ENCODE measurements at regions of chr5 and their contacts with region 1.

Region 1: GRCh38 chr5:43019614-43020293 is 20.4 kb downstream of the ANXA2R start:
- DNase-seq: no peak
- ATAC-seq: peak; percentile 78
- H3K4me3 ChIP-seq: peak overlapping the region; percentile 83
- H3K27ac ChIP-seq: peak overlapping the region; percentile 94
- H3K4me1 ChIP-seq: peaks cover 16% of the 10 kb centered on the region
- H3K27me3 ChIP-seq: no peaks in the 10 kb centered on the region
- CTCF ChIP-seq: peak; percentile 42 to 73 (median 59)
- EP300 ChIP-seq: no peak
- POLR2A ChIP-seq: peak; percentile 57
- RAD21 ChIP-seq: peak; percentile 40; the same call in 1 of the 2 replicates

Region 2: GRCh38 chr5:42454216-42454995 is 565.3 kb before region 1 on chr5:
- CTCF ChIA-PET with region 1: no interaction called
- POLR2A ChIA-PET with region 1: no interaction called
- RAD21 ChIA-PET with region 1: no interaction called
- SMC1A ChIA-PET with region 1: no interaction called
- in situ Hi-C with region 1: no loop called
- intact Hi-C with region 1: no loop called
- DNase-seq: no peak
- ATAC-seq: peak; percentile 42; the same call in 2 of the 3 replicates
- H3K4me3 ChIP-seq: no peak overlapping the region
- H3K27ac ChIP-seq: no peak overlapping the region
- H3K4me1 ChIP-seq: no peaks in the 10 kb centered on the region
- H3K27me3 ChIP-seq: no peaks in the 10 kb centered on the region
- CTCF ChIP-seq: no peak
- EP300 ChIP-seq: no peak
- POLR2A ChIP-seq: no peak
- RAD21 ChIP-seq: no peak

Region 3: DNA sequence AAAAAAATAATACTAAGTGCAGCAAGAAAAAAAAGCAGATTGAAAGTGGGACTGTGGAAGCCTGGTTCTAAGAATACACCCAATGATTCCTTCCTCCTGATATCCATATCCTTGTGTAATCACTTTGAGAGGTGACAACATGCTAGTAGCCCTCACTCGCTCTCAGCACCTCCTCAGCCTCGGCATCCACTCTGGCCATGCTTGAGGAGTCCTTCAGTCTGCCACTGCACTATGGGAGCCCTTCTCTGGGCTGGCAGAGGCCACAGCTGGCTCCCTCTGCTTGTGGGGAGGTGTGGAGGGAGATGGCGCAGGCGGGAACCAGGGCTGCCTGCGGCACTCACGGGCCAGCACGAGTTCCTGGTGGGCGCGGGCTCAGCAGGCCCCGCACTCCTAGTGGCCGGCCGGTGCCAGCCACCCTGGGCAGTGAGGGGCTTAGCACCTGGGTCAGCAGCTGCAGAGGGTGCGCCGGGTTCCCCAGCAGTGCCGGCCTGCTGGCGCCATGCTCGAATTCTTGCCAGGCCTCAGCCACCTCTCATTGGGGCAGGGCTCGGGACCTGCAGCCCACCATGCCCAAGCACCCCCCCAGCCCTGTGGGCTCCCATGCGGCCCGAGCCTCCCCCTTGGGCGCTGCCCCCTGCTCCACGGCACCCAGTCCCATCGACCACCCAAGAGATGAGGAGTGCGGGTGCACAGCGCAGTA is 183.5 kb before region 1 on chr5:
- CTCF ChIA-PET with region 1: no interaction called
- POLR2A ChIA-PET with region 1: no interaction called
- RAD21 ChIA-PET with region 1: no interaction called
- SMC1A ChIA-PET with region 1: no interaction called
- in situ Hi-C with region 1: no loop called
- intact Hi-C with region 1: no loop called
- DNase-seq: no peak
- ATAC-seq: no peak
- H3K4me3 ChIP-seq: no peak overlapping the region
- H3K27ac ChIP-seq: no peak overlapping the region
- H3K4me1 ChIP-seq: no peaks in the 10 kb centered on the region
- H3K27me3 ChIP-seq: 0 out of 4 replicates have a peak, but pooled peaks cover 0 to under 1% of the 10 kb centered on the region in 2 experiments
- CTCF ChIP-seq: no peak
- EP300 ChIP-seq: no peak
- POLR2A ChIP-seq: no peak
- RAD21 ChIP-seq: no peak

Region 4: GRCh38 chr5:43008369-43009153 is 11.2 kb before region 1 on chr5:
- CTCF ChIA-PET with region 1: interaction called, 44 read pairs
- POLR2A ChIA-PET with region 1: interaction called, 65 read pairs
- RAD21 ChIA-PET with region 1: interaction called, 78 read pairs
- SMC1A ChIA-PET with region 1: interaction called, 48 read pairs
- in situ Hi-C with region 1: no loop called
- intact Hi-C with region 1: loop called (anchors 1 kb)
- DNase-seq: no peak
- ATAC-seq: peak; percentile 72
- H3K4me3 ChIP-seq: peak overlapping the region; percentile 67
- H3K27ac ChIP-seq: peak overlapping the region; percentile 94
- H3K4me1 ChIP-seq: peaks cover 13% of the 10 kb centered on the region
- H3K27me3 ChIP-seq: no peaks in the 10 kb centered on the region
- CTCF ChIP-seq: peak in 2 of 3 experiments; percentile 5 to 13; a peak in 2 of 6 replicates
- EP300 ChIP-seq: peak in 1 of 2 experiments; percentile 77; a peak in 2 of 4 replicates
- POLR2A ChIP-seq: no peak
- RAD21 ChIP-seq: no peak

Region 5: GRCh38 chr5:43034591-43034968 is 14.8 kb after region 1 on chr5:
- CTCF ChIA-PET with region 1: interaction called, 44 read pairs
- POLR2A ChIA-PET with region 1: interaction called, 32 read pairs
- RAD21 ChIA-PET with region 1: interaction called, 48 read pairs
- SMC1A ChIA-PET with region 1: interaction called, 111 read pairs
- in situ Hi-C with region 1: no loop called
- intact Hi-C with region 1: no loop called
- DNase-seq: no peak
- ATAC-seq: no peak
- H3K4me3 ChIP-seq: no peak overlapping the region
- H3K27ac ChIP-seq: no peak overlapping the region
- H3K4me1 ChIP-seq: peaks cover 16% of the 10 kb centered on the region
- H3K27me3 ChIP-seq: no peaks in the 10 kb centered on the region
- CTCF ChIP-seq: no peak
- EP300 ChIP-seq: no peak
- POLR2A ChIP-seq: no peak
- RAD21 ChIP-seq: no peak